Right ventricle myocardium inferior (tissue), 1 donor: ENCODE measurements at regions of chr5 and their contacts with region 1.

Region 1: GRCh38 chr5:79689541-79690466 is at the start of gene CMYA5:
- DNase-seq: peak; percentile 75
- ATAC-seq: peak; percentile 75
- total RNA-seq, gene CMYA5: 886 TPM

Region 2: DNA sequence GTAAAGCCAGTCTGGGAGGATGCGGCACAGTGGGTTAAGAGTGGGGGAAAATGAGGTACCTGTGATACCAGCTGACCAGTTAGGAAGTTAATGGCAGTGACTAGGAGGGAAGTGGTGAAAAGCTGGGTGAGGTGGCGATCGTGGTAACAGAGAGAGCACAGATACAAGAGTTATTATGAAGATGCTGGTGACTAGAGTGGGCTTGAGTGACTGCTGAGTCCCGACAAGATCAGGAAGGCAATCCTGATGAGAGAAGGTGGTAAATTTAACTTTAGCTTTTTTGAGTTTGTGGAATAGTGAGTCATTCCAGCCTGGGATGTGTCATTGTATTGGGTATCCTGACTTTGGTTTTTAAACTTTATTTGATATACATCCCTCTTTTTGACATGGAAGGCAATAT is 38.6 kb after region 1 on chr5:
- intact Hi-C with region 1: loop called (anchors 5 kb)
- DNase-seq: no peak
- ATAC-seq: peak; percentile 14

Region 3: GRCh38 chr5:79743846-79744605 is 54.2 kb after region 1 on chr5:
- intact Hi-C with region 1: loop called (anchors 5 kb)
- DNase-seq: no peak
- ATAC-seq: peak; percentile 96

Region 4: DNA sequence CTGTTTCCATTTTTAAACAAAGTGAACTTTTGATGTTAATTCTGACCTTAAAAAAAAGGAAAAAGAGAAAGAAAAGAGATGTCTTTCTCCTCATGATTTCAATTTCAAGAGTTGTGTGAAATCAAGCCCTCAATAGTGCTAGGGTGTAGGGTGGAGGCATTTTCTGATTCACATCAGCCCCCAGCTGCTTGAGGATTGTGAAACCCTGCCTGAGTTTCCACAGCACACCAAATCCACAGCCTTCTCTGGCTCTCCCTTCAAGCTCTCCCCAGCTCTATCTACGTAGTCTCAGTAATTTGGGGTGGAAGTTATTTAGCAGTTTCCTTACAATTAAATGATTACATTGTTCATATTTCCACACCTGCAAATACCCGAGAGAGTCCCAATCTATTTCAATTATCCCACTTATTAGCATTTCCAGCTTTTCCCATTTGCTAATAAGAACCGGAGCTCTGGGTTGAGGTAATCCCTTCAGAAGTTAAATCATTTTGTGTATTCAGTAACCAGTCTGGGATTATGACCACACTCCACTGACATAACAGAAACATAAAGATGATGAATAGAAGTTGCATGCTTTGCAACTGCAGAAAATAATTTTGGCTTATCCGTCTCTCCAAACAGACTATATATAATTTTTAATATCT is 246.3 kb after region 1 on chr5:
- intact Hi-C with region 1: no loop called
- DNase-seq: no peak
- ATAC-seq: peak; percentile 89